OCI-LY7 (cell line): ENCODE measurements at regions of chr20 and their contacts with region 1.

Region 1: GRCh38 chr20:56974499-56975236 is 291.8 kb downstream of the BMP7 start:
- DNase-seq: peak; percentile 76
- H3K4me3 ChIP-seq: peak overlapping the region; percentile 1
- H3K27ac ChIP-seq: no peak overlapping the region
- H3K4me1 ChIP-seq: peaks cover 15% of the 10 kb centered on the region
- CTCF ChIP-seq: peak; percentile 95

Region 2: DNA sequence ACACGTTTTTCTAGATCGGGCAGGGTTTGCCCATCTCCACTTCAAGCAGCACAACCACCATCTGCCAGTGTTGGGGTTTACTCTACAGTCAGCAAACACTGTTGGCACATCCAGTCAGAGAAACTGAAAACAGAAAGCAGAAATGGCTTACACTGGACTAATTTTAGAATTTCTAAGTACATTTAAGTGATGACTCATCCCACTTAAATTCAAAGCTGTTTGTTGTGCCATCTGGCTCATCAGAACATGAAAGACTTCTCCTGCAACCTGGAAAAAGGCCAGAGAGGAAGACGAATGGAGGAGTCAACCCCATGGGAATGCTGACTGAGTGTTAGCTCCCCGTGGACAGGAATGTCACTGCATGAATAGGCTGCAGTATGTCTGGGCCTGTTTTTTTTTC is 419.8 kb before region 1 on chr20:
- CTCF ChIA-PET with region 1: no interaction called
- POLR2A ChIA-PET with region 1: no interaction called
- intact Hi-C with region 1: loop called (anchors 1 kb)
- DNase-seq: peak; percentile 63
- H3K4me3 ChIP-seq: peak overlapping the region; percentile 15
- H3K27ac ChIP-seq: peak overlapping the region; percentile 32
- H3K4me1 ChIP-seq: peaks cover 32% of the 10 kb centered on the region
- CTCF ChIP-seq: no peak

Region 3: GRCh38 chr20:56629670-56630478 is 344.8 kb before region 1 on chr20:
- CTCF ChIA-PET with region 1: no interaction called
- POLR2A ChIA-PET with region 1: no interaction called
- intact Hi-C with region 1: loop called (anchors 10 kb)
- DNase-seq: no peak
- H3K4me3 ChIP-seq: no peak overlapping the region
- H3K27ac ChIP-seq: no peak overlapping the region
- H3K4me1 ChIP-seq: no peaks in the 10 kb centered on the region
- CTCF ChIP-seq: peak; percentile 59

Region 4: DNA sequence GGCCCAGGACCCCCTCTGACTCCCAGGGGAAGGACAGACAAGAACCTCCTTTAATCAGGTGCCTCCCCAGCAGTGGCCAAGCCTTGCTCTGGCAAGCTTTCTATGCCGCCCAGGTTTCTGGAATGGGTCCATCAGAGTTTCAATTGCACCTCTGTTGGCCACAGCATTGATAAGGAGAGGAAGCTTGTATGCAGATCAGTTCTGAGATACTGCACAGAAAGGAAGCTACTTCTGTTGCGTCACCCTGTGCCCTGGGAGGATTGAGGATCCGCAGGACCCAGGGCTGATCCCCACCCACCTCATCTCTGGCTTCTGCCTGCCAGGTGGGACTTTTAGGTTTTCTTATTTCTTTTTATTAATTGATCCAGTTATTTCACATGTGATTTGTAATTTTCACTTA is 178.3 kb before region 1 on chr20:
- CTCF ChIA-PET with region 1: no interaction called
- POLR2A ChIA-PET with region 1: no interaction called
- intact Hi-C with region 1: loop called (anchors 10 kb)
- DNase-seq: no peak
- H3K4me3 ChIP-seq: no peak overlapping the region
- H3K27ac ChIP-seq: no peak overlapping the region
- H3K4me1 ChIP-seq: peaks cover 9% of the 10 kb centered on the region
- CTCF ChIP-seq: no peak

Region 5: GRCh38 chr20:57849121-57849520 is 874.5 kb after region 1 on chr20:
- CTCF ChIA-PET with region 1: no interaction called
- POLR2A ChIA-PET with region 1: no interaction called
- intact Hi-C with region 1: no loop called
- DNase-seq: no peak
- H3K4me3 ChIP-seq: no peak overlapping the region
- H3K27ac ChIP-seq: no peak overlapping the region
- H3K4me1 ChIP-seq: no peaks in the 10 kb centered on the region
- CTCF ChIP-seq: no peak